ENCODE measurements at regions of chr6 and their contacts with region 1.

Region 1: DNA sequence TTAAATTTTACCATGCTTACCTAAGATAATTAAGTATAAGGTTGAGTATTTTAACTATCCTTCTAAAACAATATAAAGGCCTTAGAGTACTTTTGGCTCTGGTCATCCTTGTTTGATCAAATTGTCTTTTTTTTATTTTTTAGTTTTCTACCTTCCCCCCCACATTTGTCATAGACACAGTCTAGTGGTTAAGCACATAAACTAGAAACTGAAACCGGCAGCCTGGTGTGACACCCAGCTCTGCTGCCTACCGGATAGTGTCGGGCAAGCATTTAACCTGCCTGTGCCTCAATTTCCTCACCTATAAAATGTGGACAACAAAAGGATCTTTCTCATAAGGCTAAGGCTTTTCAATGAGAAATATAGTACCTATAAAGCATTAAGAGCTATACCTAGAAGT is 21.6 kb upstream of the TULP4 start:
- DNase-seq: peak; percentile 39
- ATAC-seq: peak; percentile 96
- H3K4me3 ChIP-seq: peak overlapping the region; percentile 55
- H3K27ac ChIP-seq: peak overlapping the region; percentile 57
- H3K4me1 ChIP-seq: peaks cover 30% of the 10 kb centered on the region
- H3K27me3 ChIP-seq: no peaks in the 10 kb centered on the region
- CTCF ChIP-seq: no peak
- EP300 ChIP-seq: no peak
- POLR2A ChIP-seq: no peak
- RAD21 ChIP-seq: no peak

Region 2: DNA sequence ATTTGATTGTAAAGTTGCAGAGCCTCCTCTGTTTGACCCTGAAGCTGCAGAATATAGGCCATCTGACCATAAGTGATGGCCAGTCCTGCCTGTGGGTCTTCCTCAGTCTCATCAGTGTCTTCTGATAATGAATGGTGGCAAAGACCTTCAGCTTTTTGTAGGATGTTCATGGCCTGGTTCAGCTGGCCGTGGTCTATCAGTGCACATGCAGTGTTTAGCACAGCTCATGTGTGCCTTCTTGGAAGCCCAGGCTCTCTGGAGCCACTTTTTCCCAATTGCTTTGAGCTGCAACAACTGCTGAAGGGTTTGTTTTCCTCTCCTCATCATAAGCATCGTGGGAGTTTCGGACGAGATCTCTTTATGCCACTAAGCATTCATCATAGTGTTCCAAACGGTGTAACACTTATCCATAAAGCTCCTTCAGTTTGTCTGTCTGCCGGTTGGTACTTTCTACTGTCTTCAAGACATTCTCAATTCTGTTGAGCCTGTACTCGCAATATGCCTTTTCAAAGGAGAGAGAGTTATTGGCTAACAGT is 48.5 kb before region 1 on chr6:
- CTCF ChIA-PET with region 1: interaction called, 3 read pairs
- POLR2A ChIA-PET with region 1: interaction called, 4 read pairs
- RAD21 ChIA-PET with region 1: interaction called, 3 read pairs
- SMC1A ChIA-PET with region 1: interaction called, 10 read pairs
- in situ Hi-C with region 1: no loop called
- intact Hi-C with region 1: no loop called
- DNase-seq: no peak
- ATAC-seq: peak; percentile 26
- H3K4me3 ChIP-seq: no peak overlapping the region
- H3K27ac ChIP-seq: peak overlapping the region; percentile 63
- H3K4me1 ChIP-seq: peaks cover 25% of the 10 kb centered on the region
- H3K27me3 ChIP-seq: no peaks in the 10 kb centered on the region
- CTCF ChIP-seq: no peak
- EP300 ChIP-seq: 0 out of 4 replicates have a peak, but pooled peaks of 1 of the 2 experiments have one; percentile 18
- POLR2A ChIP-seq: no peak
- RAD21 ChIP-seq: no peak

Region 3: DNA sequence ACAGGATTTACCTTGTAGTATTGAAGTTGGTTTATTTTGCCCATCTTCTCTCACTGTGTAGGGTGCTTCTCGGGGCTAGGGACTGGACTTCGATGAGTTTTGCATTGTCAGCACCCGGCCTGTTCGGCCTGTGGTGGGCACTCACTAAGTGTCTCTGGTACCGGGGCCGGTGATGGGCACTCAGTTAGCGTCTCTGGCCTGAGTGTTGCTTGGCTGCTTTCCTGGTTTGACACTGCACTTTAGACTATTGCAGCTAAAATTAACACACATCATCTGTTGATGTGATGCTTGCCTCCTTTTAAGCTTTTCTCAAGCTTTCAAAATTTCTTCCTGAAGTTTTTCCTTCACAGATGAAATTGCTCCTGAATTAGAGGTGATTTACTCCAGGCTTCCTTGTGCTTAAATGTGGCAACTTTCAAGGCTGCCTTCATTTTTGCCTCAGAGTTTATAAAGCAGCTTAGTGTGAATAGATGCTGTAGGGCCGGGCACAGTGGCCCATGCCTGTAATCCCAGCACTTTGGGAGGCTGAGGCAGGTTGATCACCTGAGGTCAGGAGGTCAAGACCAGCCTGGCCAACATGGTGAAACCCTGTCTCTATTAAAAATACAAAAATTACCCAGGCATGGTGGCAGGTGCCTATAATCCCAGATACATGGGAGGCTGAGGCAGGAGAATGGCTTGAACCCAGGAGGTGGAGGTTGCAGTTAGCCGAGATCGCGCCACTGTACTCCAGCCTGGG is 20.1 kb before region 1 on chr6:
- CTCF ChIA-PET with region 1: no interaction called
- POLR2A ChIA-PET with region 1: interaction called, 4 read pairs
- RAD21 ChIA-PET with region 1: interaction called, 14 read pairs
- SMC1A ChIA-PET with region 1: interaction called, 13 read pairs
- in situ Hi-C with region 1: no loop called
- intact Hi-C with region 1: no loop called
- DNase-seq: no peak
- ATAC-seq: peak; percentile 32
- H3K4me3 ChIP-seq: no peak overlapping the region
- H3K27ac ChIP-seq: peak overlapping the region; percentile 54
- H3K4me1 ChIP-seq: peaks cover 20% of the 10 kb centered on the region
- H3K27me3 ChIP-seq: no peaks in the 10 kb centered on the region
- CTCF ChIP-seq: no peak
- EP300 ChIP-seq: no peak
- POLR2A ChIP-seq: no peak
- RAD21 ChIP-seq: no peak

Region 4: GRCh38 chr6:158439255-158439654 is 148.6 kb after region 1 on chr6:
- CTCF ChIA-PET with region 1: no interaction called
- POLR2A ChIA-PET with region 1: no interaction called
- RAD21 ChIA-PET with region 1: interaction called, 10 read pairs
- SMC1A ChIA-PET with region 1: interaction called, 3 read pairs
- in situ Hi-C with region 1: no loop called
- intact Hi-C with region 1: no loop called
- DNase-seq: peak; percentile 72
- ATAC-seq: peak; percentile 99
- H3K4me3 ChIP-seq: no peak overlapping the region
- H3K27ac ChIP-seq: no peak overlapping the region
- H3K4me1 ChIP-seq: peaks cover 5% of the 10 kb centered on the region
- H3K27me3 ChIP-seq: no peaks in the 10 kb centered on the region
- CTCF ChIP-seq: no peak
- EP300 ChIP-seq: peak; percentile 65 to 81; a peak in 3 of 4 replicates
- POLR2A ChIP-seq: no peak
- RAD21 ChIP-seq: no peak

Region 5: GRCh38 chr6:159084493-159085091 is 793.9 kb after region 1 on chr6:
- CTCF ChIA-PET with region 1: no interaction called
- POLR2A ChIA-PET with region 1: no interaction called
- RAD21 ChIA-PET with region 1: no interaction called
- SMC1A ChIA-PET with region 1: no interaction called
- in situ Hi-C with region 1: no loop called
- intact Hi-C with region 1: no loop called
- DNase-seq: no peak
- ATAC-seq: peak; percentile 46; the same call in 2 of the 3 replicates
- H3K4me3 ChIP-seq: no peak overlapping the region
- H3K27ac ChIP-seq: no peak overlapping the region
- H3K4me1 ChIP-seq: peaks cover 4% of the 10 kb centered on the region; the same call in 1 of the 2 replicates
- H3K27me3 ChIP-seq: no peaks in the 10 kb centered on the region
- CTCF ChIP-seq: no peak
- EP300 ChIP-seq: no peak
- POLR2A ChIP-seq: no peak
- RAD21 ChIP-seq: no peak

Measured in GM12878 (cell line).